ENCODE measurements at regions of chr1 and their contacts with region 1.

Region 1: DNA sequence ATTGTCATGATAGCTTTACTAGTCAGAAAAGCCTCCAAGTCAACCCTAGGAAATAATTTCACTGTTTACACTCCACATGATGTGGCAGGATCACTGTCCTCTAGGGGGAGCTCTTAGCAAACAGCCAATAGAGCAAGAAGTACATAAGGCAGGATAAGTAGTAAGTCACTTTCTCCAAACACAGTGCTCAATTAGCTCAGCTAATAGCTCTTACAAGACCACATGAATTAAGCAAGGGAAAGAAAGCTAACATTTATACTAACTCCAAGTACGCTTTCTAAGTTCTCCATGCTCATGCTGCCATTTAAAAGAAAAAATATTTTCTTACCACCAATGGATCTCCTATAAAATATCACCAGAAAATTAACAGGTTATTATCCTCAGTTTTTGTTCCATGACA is 66.9 kb upstream of the LRIF1 start:
- DNase-seq: no peak
- H3K4me3 ChIP-seq: no peak overlapping the region
- CTCF ChIP-seq: peak; percentile 78

Region 2: GRCh38 chr1:110990536-110990935 is 40.1 kb before region 1 on chr1:
- CTCF ChIA-PET with region 1: interaction called, 10 read pairs
- POLR2A ChIA-PET with region 1: no interaction called
- DNase-seq: no peak
- H3K4me3 ChIP-seq: no peak overlapping the region
- CTCF ChIP-seq: no peak

Region 3: DNA sequence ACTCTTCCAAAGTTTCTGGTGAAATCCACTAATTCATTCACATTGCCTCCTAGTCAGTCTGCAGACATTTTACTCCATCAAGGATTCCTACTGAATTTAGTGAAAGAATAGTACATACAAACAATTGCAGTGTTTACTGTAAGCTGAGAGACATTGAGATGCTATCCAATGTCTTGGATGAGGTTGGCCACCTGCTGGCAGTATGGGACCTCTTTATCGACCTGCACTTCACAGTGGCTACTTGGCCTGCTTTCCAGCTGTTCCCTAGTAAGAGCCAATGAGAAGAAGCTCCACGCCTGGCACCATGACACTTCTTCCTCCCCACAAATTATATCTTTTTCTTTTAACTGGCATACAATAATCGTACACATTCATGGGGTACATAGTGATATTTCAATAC is 15.4 kb before region 1 on chr1:
- CTCF ChIA-PET with region 1: interaction called, 32 read pairs
- POLR2A ChIA-PET with region 1: no interaction called
- DNase-seq: no peak
- H3K4me3 ChIP-seq: no peak overlapping the region
- CTCF ChIP-seq: no peak

Region 4: GRCh38 chr1:111045033-111045722 is 14.6 kb after region 1 on chr1:
- CTCF ChIA-PET with region 1: interaction called, 17 read pairs
- POLR2A ChIA-PET with region 1: no interaction called
- DNase-seq: peak; percentile 23
- H3K4me3 ChIP-seq: no peak overlapping the region
- CTCF ChIP-seq: no peak

Region 5: DNA sequence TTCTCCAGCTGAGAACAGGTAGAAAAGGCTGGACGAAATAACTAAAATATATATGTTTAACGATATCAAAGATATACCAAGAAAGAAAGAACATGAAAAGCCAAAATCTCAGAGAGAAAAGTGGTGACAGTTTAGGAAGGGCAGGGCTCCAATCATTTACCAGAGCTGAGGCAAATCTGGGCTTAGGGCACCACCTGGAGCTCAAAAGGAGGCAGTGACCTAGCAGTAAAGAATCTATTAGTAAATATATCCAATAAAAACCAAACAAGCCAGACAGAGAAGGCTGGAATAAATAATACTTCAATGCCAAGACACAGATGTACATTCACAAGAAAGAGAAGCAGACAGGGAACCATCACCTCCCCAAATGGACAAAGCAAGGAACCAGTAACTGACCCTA is 303.6 kb after region 1 on chr1:
- CTCF ChIA-PET with region 1: interaction called, 30 read pairs
- POLR2A ChIA-PET with region 1: no interaction called
- DNase-seq: no peak
- H3K4me3 ChIP-seq: no peak overlapping the region
- CTCF ChIP-seq: peak; percentile 60

Region 6: DNA sequence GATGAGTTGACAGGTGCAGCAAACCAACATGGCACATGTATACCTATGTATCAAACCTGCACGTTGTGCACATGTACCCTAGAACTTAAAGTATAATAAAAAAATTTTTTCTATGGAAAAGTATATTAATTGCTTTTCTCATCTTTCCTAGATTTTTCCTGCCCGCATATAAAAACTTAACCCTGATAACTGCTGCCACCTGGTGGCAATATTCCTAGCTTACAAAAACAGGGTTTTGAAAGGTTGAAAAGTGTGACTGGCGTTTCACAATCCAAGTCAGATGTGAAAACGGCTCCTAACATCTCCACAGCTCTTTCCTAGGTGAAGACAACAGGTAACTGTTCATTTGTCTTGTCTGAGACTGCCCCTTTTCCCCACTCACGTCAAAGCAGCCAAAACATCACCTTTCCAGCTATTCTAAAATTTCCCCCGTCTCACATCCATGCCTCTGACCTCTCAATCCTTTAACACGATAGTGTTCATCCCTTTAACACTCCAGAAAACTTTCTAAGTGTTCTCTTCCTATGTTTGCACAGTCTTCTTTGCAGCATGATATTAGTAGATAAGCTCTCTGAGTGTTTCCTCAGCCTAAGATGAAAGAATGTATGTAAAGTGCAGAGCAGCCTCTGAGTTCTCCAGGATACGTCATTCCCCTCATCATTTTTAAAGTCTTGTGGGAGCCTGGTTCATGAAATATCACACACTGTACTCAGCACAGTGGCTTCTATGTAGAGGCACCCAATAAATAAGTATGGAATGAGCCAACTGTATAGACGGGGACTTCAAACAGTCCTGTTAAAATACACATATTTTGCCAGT is 369.4 kb after region 1 on chr1:
- CTCF ChIA-PET with region 1: interaction called, 20 read pairs
- POLR2A ChIA-PET with region 1: no interaction called
- DNase-seq: no peak
- H3K4me3 ChIP-seq: no peak overlapping the region
- CTCF ChIP-seq: peak; percentile 54

Measured in AG04449 (cell line).